ENCODE measurements at regions of chr6 and their contacts with region 1.

Region 1: GRCh38 chr6:25601800-25602673 is 50.0 kb upstream of the SCGN start:
- DNase-seq: no peak
- ATAC-seq: no peak
- H3K4me3 Mint-ChIP-seq: no peak overlapping the region
- H3K27ac Mint-ChIP-seq: no peak overlapping the region
- H3K4me1 Mint-ChIP-seq: no peaks in the 10 kb centered on the region
- H3K27me3 Mint-ChIP-seq: no peaks in the 10 kb centered on the region

Region 2: DNA sequence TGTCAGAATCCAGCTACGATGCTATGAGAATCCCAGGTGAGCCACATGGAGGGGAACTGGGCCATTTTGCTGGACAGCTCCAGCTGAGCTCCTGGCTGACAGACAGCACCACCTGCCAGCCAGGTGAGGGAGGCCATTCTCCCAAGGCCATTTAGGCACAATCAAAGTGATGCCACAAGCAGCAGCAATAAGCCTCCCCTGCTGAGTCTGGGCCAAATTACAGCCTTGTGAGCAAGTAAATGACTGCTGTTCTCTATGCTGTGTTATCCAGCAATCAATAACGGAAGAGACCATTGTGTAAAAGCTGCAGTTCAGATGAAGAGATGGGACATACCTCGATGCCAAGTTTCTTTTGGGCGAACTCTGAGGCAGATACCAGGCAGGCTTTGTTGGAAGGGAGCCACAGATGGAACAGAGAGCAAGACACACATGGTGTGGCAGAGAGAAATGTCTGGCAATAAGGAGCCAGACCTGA is 36.0 kb after region 1 on chr6:
- CTCF ChIA-PET with region 1: no interaction called
- POLR2A ChIA-PET with region 1: no interaction called
- intact Hi-C with region 1: no loop called
- DNase-seq: peak; percentile 7
- ATAC-seq: no peak
- H3K4me3 Mint-ChIP-seq: no peak overlapping the region
- H3K27ac Mint-ChIP-seq: no peak overlapping the region
- H3K4me1 Mint-ChIP-seq: no peaks in the 10 kb centered on the region
- H3K27me3 Mint-ChIP-seq: peaks cover 29% of the 10 kb centered on the region

Region 3: DNA sequence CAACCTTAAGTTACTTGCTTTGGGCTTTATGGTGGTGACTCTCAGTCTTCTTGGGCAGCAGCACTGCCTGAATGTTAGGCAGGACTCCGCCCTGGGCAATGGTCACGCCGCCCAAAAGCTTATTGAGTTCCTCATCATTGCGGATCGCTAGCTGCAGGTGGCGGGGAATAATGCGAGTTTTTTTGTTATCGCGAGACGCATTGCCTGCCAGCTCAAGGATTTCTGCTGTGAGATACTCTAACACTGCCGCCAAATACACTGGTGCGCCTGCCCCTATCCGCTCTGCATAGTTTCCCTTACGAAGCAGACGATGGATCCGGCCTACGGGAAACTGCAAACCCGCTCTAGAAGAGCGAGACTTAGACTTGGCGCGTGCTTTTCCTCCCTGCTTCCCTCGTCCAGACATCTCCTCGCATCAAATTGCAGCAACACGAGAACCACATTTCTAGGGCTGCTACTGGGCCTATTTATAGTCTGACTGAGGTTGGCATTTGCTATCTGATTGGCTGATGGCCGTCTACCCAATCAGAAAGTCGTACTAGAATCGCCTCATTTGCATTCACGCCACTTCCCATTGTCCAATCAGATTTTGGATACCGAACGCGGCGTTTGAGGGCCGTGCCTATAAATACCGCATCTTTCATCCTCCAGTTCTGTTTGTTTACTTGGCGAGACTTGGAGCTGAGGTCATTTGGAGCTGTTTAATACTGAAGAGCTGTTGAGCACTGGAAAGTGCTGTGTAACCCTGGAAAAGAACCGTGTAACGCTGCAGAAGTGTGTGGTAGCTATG is 124.3 kb after region 1 on chr6:
- CTCF ChIA-PET with region 1: no interaction called
- POLR2A ChIA-PET with region 1: no interaction called
- intact Hi-C with region 1: no loop called
- DNase-seq: no peak
- ATAC-seq: no peak
- H3K4me3 Mint-ChIP-seq: no peak overlapping the region
- H3K27ac Mint-ChIP-seq: no peak overlapping the region
- H3K4me1 Mint-ChIP-seq: no peaks in the 10 kb centered on the region
- H3K27me3 Mint-ChIP-seq: peaks cover 29% of the 10 kb centered on the region

Region 4: GRCh38 chr6:25927756-25928216 is 325.7 kb after region 1 on chr6:
- CTCF ChIA-PET with region 1: no interaction called
- POLR2A ChIA-PET with region 1: no interaction called
- intact Hi-C with region 1: loop called in 1 of 2 experiments (anchors 2 kb)
- DNase-seq: no peak
- ATAC-seq: no peak
- H3K4me3 Mint-ChIP-seq: no peak overlapping the region
- H3K27ac Mint-ChIP-seq: no peak overlapping the region
- H3K4me1 Mint-ChIP-seq: peaks cover 7% of the 10 kb centered on the region
- H3K27me3 Mint-ChIP-seq: peaks cover 3% of the 10 kb centered on the region

Region 5: DNA sequence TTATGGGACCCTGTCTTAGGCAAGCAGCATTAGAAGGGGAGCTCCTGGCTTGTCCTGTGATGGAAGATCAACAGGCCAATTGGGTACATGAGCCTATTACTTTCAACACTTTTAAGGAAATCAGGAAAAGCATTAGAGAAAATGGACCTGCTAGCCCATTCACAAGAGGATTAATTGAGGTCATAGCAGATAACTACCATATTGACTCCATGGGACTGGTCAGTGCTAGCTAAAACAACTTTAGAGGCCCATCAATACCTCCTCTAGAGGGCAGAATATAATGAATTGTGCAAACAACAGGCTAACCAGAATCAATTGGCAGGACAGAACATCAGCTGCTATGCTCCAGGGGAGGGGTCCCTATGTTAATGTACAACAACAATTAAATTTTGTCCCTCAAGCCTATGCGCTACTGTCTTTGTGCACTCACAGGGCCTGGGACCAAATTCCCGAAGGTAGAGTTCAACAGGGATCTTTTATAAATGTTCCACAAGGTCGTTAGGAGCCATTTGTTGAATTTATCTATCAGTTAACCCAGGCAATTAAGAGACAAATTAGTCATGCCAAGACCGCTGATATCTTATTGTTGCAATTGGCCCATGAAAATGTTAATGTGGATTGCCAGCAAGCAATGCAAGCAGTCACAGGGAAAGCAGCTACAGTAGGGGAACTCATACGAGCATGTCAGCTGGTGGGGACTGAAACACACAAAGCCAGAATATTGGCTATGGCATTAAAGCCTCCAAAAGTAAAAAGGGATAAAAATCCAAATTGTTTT is 656.4 kb after region 1 on chr6:
- CTCF ChIA-PET with region 1: no interaction called
- POLR2A ChIA-PET with region 1: no interaction called
- intact Hi-C with region 1: no loop called
- DNase-seq: no peak
- ATAC-seq: no peak
- H3K4me3 Mint-ChIP-seq: no peak overlapping the region
- H3K27ac Mint-ChIP-seq: no peak overlapping the region
- H3K4me1 Mint-ChIP-seq: no peaks in the 10 kb centered on the region
- H3K27me3 Mint-ChIP-seq: no peaks in the 10 kb centered on the region

Measured in activated CD4-positive, alpha-beta T cell treated with anti-CD3 and anti-CD28 coated beads for 36 hours (primary cell).